Ovary (tissue), 10 donors: ENCODE measurements at regions of chr12 and their contacts with region 1.

Region 1: GRCh38 chr12:32714772-32715171 is 35.7 kb downstream of the DNM1L start:
- DNase-seq: no peak
- H3K4me3 ChIP-seq: no peak overlapping the region
- H3K27ac ChIP-seq: no peak overlapping the region
- H3K4me1 ChIP-seq: no peaks in the 10 kb centered on the region
- H3K27me3 ChIP-seq: no peaks in the 10 kb centered on the region
- CTCF ChIP-seq: no peak
- EP300 ChIP-seq: no peak
- POLR2A ChIP-seq: no peak

Region 2: GRCh38 chr12:32284561-32284960 is 430.2 kb before region 1 on chr12:
- intact Hi-C with region 1: loop called in 1 of 4 experiments (anchors 5 kb)
- DNase-seq: no peak
- H3K4me3 ChIP-seq: no peak overlapping the region
- H3K27ac ChIP-seq: no peak overlapping the region
- H3K4me1 ChIP-seq: peaks cover 4% of the 10 kb centered on the region
- H3K27me3 ChIP-seq: no peaks in the 10 kb centered on the region
- CTCF ChIP-seq: no peak
- EP300 ChIP-seq: no peak
- POLR2A ChIP-seq: no peak

Region 3: GRCh38 chr12:32627976-32628375 is 86.8 kb before region 1 on chr12:
- intact Hi-C with region 1: no loop called
- DNase-seq: no peak
- H3K4me3 ChIP-seq: no peak overlapping the region
- H3K27ac ChIP-seq: no peak overlapping the region
- H3K4me1 ChIP-seq: no peaks in the 10 kb centered on the region
- H3K27me3 ChIP-seq: no peaks in the 10 kb centered on the region
- CTCF ChIP-seq: no peak
- EP300 ChIP-seq: no peak
- POLR2A ChIP-seq: no peak